Naive thymus-derived CD4-positive, alpha-beta T cell (primary cell): ENCODE measurements at regions of chr15 and their contacts with region 1.

Region 1: GRCh38 chr15:35560870-35561269 is 14.9 kb upstream of the DPH6 start:
- DNase-seq: no peak
- ATAC-seq: no peak
- H3K4me3 ChIP-seq: no peak overlapping the region
- H3K4me3 Mint-ChIP-seq: no peak overlapping the region
- H3K27ac ChIP-seq: no peak overlapping the region
- H3K27ac Mint-ChIP-seq: no peak overlapping the region
- H3K4me1 ChIP-seq: no peaks in the 10 kb centered on the region
- H3K4me1 Mint-ChIP-seq: no peaks in the 10 kb centered on the region
- H3K27me3 ChIP-seq: no peaks in the 10 kb centered on the region
- H3K27me3 Mint-ChIP-seq: peaks cover 0 to under 1% (median 0%) of the 10 kb centered on the region in 5 donors

Region 2: GRCh38 chr15:34373951-34374350 is 1186.9 kb before region 1 on chr15:
- CTCF ChIA-PET with region 1: no interaction called
- POLR2A ChIA-PET with region 1: no interaction called
- intact Hi-C with region 1: loop called in 1 of 2 experiments (anchors 10 kb)
- DNase-seq: no peak
- ATAC-seq: no peak
- H3K4me3 ChIP-seq: no peak overlapping the region
- H3K4me3 Mint-ChIP-seq: no peak overlapping the region
- H3K27ac ChIP-seq: no peak overlapping the region
- H3K27ac Mint-ChIP-seq: peak overlapping the region in 1 of 9 donors; percentile 36
- H3K4me1 ChIP-seq: no peaks in the 10 kb centered on the region
- H3K4me1 Mint-ChIP-seq: peaks cover 0 to 12% (median 0%) of the 10 kb centered on the region in 7 donors
- H3K27me3 ChIP-seq: no peaks in the 10 kb centered on the region
- H3K27me3 Mint-ChIP-seq: no peaks in the 10 kb centered on the region